ENCODE measurements at regions of chr12 and their contacts with region 1.

Region 1: GRCh38 chr12:5988659-5989116 is 43.6 kb upstream of the ANO2 start:
- DNase-seq: peak; percentile 61 to 82
- ATAC-seq: peak; percentile 99

Region 2: GRCh38 chr12:5745265-5745888 is 243.3 kb before region 1 on chr12:
- intact Hi-C with region 1: no loop called
- DNase-seq: peak; percentile 40 to 79
- ATAC-seq: peak; percentile 82

Region 3: GRCh38 chr12:5768581-5769196 is 220.0 kb before region 1 on chr12:
- intact Hi-C with region 1: no loop called
- DNase-seq: peak in 1 of 2 donors; percentile 14
- ATAC-seq: no peak

Region 4: GRCh38 chr12:6039894-6040568 is 51.3 kb after region 1 on chr12:
- intact Hi-C with region 1: loop called (anchors 5 to 10 kb)
- DNase-seq: peak; percentile 32 to 46
- ATAC-seq: peak; percentile 81

Region 5: DNA sequence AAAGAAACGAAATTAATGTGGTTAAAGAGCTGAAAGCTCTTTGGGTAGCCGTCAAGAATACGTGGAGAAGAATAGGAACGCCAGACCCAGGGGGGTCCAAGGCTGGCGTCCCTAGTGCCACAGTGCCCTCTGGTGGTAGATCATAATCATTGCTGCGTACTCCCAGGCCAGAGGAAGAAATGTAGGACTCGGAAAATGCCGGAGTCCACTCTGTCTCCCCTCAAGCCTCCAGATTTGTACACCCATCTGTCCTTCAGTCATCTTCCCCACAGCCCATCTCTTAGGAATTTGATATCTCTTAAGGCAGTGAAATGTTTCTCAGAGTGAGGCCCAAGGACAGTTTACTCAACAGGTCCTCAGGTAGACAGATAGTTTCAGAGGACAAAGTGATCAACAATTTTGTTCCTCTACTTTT is 296.4 kb after region 1 on chr12:
- intact Hi-C with region 1: loop called in 1 of 2 experiments (anchors 10 kb)
- DNase-seq: peak in 1 of 2 donors; percentile 48
- ATAC-seq: peak; percentile 65

Region 6: DNA sequence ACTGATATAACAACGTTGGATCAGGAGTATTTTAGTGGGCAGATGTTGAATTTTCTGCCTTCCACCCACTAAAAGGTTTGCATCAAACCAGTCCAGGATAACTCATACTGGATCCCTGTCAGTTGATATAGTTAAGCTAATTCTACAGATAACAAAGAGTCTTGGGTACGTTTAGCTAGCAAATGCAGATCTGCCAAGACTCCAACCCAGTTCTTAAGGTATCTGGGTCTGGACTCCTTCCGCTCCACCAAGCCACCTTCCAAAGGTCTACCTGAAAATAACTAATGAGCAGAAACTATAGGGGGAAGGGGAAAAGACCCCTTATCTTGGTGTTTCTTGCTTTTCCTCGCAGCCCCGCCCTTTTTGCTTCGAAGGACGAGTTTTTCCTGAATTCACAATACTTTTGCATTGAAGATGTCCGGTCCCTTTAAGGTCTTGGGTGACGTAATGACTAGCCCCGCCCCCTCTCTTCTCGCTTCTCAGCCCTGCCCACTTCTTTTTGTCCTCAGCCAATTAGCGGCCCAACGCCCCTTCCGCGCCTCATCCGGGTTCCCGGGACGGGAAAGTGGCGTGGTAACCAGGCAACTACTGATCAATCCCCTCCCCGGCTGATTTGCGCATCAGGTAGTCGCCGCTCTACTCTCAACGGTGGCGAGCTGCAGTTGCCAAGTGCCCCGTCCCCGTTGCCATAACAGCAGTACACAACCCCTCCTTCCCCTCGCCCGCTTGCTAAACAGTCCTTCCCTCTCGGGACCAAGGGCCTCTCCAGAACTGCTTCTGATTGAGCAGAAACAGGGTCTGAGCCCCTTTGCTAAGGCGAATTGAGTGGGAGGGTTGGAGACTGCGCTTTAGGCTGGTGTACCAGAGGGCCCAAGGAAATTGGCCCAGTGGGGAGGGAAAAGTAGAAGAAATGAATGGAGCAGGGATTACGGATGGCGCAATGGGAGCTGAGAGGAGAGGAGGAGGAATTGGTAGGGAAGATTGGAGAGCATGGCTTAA is 915.9 kb after region 1 on chr12 and contains the start of gene LRRC23:
- intact Hi-C with region 1: no loop called
- DNase-seq: peak; percentile 98 to 100
- ATAC-seq: peak; percentile 86
- total RNA-seq, gene LRRC23: 2.9 to 4.3 TPM